ENCODE measurements at regions of chr1 and their contacts with region 1.

Region 1: DNA sequence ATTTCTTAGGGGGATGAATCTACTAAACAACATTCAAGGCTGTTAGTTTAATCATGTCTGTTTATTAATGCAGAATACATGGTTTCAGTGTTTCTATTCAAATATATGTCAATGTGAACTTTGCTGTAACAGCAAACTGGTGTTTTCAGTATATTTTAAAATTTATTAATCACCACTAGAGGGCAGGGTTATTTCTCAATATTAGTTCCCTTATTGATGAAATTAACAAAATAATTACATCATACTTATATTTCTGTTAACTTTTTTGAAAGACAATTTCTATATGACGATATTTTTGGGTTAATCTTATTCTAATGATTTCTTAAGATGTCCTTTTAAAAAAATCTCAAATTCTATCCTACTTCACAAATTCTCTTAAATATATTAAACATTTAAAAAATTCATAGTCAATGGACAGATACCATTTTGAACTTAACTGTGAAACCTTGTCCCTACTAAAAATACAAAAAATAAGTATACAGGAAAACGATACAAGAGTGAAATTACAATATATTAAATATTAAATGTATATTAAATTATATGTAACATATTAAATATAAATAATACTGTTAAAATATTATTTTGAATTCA is 1034.1 kb upstream of the PRMT6 start:
- DNase-seq: no peak
- H3K4me3 Mint-ChIP-seq: no peak overlapping the region
- H3K27ac Mint-ChIP-seq: no peak overlapping the region
- H3K4me1 Mint-ChIP-seq: no peaks in the 10 kb centered on the region
- H3K27me3 Mint-ChIP-seq: no peaks in the 10 kb centered on the region
- CTCF ChIP-seq: no peak

Region 2: DNA sequence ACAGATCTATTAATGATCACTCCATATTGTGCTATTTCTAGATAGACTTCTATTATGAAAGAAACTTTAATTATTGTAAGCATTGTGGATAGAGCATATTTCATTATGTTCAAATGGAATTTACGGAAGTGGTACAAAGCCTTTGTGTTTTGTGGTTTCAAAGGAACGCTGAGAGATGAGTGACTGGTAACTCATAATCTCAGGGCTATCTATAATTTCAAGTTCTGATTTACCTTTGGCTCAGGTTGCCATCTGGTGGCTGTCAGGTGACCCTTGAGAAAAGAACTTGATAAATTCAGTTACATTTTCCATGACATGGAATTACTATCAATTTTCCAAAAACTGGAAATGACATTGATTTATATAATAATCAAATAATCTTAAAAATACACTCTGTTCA is 1130.6 kb after region 1 on chr1:
- CTCF ChIA-PET with region 1: no interaction called
- intact Hi-C with region 1: loop called (anchors 1 kb)
- DNase-seq: peak; percentile 17
- H3K4me3 Mint-ChIP-seq: no peak overlapping the region
- H3K27ac Mint-ChIP-seq: no peak overlapping the region
- H3K4me1 Mint-ChIP-seq: no peaks in the 10 kb centered on the region
- H3K27me3 Mint-ChIP-seq: no peaks in the 10 kb centered on the region
- CTCF ChIP-seq: no peak

Measured in Calu3 (cell line).